ENCODE measurements at regions of chrX and their contacts with region 1.

Region 1: GRCh38 chrX:110944311-110944750 is 148.7 kb upstream of the CHRDL1 start:
- DNase-seq: peak; percentile 3
- H3K4me3 Mint-ChIP-seq: peak overlapping the region; percentile 82
- H3K27ac Mint-ChIP-seq: peak overlapping the region; percentile 17
- H3K4me1 Mint-ChIP-seq: peaks cover 41% of the 10 kb centered on the region
- H3K27me3 Mint-ChIP-seq: peaks cover 90% of the 10 kb centered on the region
- CTCF ChIP-seq: no peak

Region 2: DNA sequence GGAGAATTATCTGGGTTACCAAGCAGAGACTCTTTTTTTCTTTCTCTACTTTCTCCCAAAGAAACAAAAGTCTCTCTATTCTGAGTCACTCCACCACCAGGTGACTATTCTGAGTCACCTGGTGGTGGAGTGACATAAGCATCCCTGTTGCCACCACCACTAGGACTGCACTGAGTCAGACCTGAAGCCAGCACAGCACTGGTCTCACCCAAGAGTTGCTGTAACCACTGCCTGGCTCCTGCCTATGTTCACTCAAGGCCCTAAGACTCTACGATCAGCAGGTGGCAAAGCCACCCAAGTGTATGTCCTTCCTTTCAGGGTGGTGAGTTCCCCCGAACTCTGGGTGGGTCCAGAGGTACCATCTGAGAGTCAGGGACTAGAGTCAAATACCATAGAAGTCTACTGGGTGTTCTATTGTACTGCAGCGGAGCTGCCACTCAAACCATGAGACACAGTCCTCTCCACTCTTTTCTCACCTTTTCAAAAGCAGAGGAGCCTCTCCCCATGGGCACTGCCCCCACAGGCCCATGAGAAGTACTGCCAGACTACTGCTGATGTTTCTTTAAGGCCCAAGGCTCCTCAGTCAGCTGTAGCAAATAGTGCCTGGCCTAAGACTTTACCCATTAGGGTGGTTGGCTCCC is 1998.3 kb before region 1 on chrX:
- CTCF ChIA-PET with region 1: no interaction called
- POLR2A ChIA-PET with region 1: no interaction called
- intact Hi-C with region 1: no loop called
- DNase-seq: peak; percentile 11
- H3K4me3 Mint-ChIP-seq: no peak overlapping the region
- H3K27ac Mint-ChIP-seq: no peak overlapping the region
- H3K4me1 Mint-ChIP-seq: no peaks in the 10 kb centered on the region
- H3K27me3 Mint-ChIP-seq: peaks cover 72% of the 10 kb centered on the region
- CTCF ChIP-seq: no peak

Region 3: GRCh38 chrX:110966839-110967238 is 22.5 kb after region 1 on chrX:
- CTCF ChIA-PET with region 1: interaction called, 4 read pairs
- POLR2A ChIA-PET with region 1: interaction called, 11 read pairs
- intact Hi-C with region 1: no loop called
- DNase-seq: peak; percentile 62
- H3K4me3 Mint-ChIP-seq: no peak overlapping the region
- H3K27ac Mint-ChIP-seq: peak overlapping the region; percentile 37
- H3K4me1 Mint-ChIP-seq: peaks cover 11% of the 10 kb centered on the region
- H3K27me3 Mint-ChIP-seq: peaks cover 45% of the 10 kb centered on the region
- CTCF ChIP-seq: no peak